ENCODE measurements at regions of chr10 and their contacts with region 1.

Region 1: DNA sequence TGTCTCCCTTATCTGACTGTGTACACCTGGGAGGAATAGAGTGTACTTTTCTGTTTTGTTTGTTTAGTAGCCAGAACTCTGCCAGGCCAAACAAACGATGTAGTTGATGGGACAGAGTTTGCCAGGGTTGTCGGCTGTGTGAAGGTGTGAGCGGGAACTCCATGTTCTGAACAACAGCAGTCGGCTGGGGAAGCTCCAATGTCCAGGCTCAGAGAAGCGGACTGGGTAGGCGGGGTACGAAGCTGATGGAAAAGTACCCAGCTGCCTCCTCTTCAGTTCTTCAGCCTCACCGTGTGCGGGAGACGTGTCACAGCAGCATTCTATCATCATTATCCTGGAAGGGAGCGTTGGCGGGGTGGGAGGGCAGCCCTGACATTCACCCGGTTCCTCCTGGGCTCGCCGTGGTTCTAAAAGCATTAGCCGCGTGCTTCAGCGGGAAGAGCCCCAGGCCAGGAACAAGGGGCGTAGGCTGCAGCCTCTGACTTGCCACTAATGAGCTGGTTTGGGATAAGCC is 52.9 kb downstream of the PFKFB3 start:
- DNase-seq: no peak
- H3K4me3 ChIP-seq: no peak overlapping the region
- H3K27ac ChIP-seq: no peak overlapping the region
- H3K27me3 ChIP-seq: no peaks in the 10 kb centered on the region
- CTCF ChIP-seq: no peak

Region 2: DNA sequence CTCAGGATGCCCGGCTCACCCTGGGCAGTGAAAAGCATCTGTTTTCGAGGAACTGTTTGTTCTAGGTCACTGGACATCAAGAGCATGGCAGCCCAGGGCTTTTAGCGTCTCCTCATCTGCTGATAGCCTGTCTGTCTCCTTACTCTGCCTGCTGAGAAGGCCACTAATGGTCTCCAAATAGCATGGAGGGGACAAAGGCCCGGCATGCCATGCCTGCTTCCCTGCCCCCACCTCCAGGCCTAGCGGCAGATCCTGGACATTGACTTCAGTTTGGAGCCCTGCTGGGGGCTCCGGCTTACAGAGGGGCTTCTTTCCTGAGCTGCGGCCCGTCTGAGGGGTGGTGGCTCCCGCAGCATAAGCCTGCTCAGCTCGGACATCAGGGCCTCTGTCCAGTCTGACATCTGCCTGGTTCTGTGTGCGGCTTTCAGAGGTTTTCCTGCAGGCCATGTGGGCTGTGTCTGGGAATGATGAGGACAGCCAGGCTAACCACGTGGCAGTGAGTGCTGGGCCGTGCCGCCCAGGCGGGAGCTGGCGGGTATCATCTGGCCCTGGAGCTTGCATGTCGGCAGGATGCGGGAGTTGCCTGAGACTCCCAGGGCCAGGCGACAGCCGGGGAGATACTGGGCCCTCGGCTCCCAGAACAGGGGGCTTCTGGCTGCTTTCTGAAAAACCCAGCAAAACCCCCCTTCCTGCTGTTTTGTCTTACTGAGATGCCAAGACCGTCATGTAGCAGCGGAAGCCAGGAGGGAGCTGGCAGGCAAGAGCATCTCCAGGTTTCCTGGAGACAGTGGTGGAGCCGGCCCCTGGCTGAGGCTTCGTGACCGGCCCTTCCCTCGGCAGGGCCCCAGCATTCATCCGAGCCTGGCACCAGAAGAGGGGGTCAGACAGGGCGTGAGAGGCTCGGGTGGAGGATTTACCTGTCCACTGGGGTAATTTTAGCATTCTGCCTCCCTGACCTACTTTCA is 43.7 kb before region 1 on chr10:
- CTCF ChIA-PET with region 1: no interaction called
- POLR2A ChIA-PET with region 1: interaction called, 12 read pairs
- DNase-seq: no peak
- H3K4me3 ChIP-seq: no peak overlapping the region
- H3K27ac ChIP-seq: peak overlapping the region; percentile 21
- H3K27me3 ChIP-seq: no peaks in the 10 kb centered on the region
- CTCF ChIP-seq: no peak